Heart right ventricle (tissue), 16 donors: ENCODE measurements at regions of chr11 and their contacts with region 1.

Region 1: GRCh38 chr11:134024420-134025081 is 44.3 kb upstream of the JAM3 start:
- DNase-seq: no peak
- ATAC-seq: no peak
- H3K4me3 ChIP-seq: no peak overlapping the region
- H3K27ac ChIP-seq: no peak overlapping the region
- H3K4me1 ChIP-seq: peaks cover 0 to 14% (median 3%) of the 10 kb centered on the region in 9 donors
- H3K27me3 ChIP-seq: peaks cover 0 to 12% (median 0%) of the 10 kb centered on the region in 7 donors
- CTCF ChIP-seq: no peak

Region 2: DNA sequence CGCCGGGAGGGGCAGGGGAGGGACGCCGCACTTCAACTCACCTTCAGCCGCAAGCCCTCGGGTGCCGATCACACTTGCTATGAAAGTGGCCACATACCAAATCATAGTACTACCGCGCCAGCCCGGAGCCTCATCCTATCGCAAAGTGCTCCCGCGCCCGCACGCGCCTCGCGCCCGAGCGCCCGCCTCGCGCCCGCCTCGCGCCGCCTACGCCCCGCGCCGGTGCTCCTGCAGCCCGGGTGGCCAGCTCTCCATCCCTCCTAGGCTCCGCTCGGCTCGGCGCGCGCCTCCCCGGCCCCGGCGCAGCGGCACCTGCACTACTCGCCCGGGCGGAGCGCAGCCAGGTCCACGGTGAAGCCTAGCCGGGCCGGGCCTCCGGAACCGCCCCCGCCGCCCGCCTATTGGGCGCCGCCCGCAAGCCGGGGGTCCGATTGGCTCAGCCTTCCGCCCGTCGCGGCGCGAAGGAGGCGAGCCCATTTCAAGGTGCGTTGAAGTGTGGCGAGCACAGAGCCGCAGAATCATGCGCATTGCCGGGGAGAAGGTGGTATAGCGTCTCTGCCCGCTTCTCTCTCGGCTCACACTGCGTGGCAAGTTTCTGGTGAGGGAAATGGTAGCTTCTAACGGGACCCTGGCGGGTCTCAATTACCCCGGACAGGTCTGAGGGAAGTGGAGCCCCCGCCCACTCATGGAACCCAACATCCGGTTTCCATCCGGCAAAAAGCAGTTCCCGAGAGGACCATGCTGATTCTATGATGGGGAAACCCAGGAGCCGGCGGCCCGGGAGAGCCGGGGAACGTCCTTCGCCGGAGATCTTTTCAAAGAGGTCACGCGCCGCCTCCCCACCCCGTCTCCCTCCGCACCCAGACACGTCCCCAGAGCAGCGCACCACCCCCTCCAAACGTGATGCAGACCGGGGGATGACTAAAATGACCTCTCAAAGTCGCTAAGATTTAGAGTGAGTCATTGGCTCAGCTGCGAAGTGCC is 67.6 kb before region 1 on chr11 and contains the start of gene IGSF9B:
- intact Hi-C with region 1: loop called in 1 of 10 experiments (anchors 5 kb)
- DNase-seq: peak; percentile 86 to 88
- ATAC-seq: peak; percentile 78 to 90 (median 88)
- H3K4me3 ChIP-seq: peak within 1 kb of the TSS; percentile 47 to 73 (median 68)
- H3K27ac ChIP-seq: peak within 1 kb of the TSS; percentile 67 to 96 (median 90)
- H3K4me1 ChIP-seq: peaks cover 7 to 54% (median 33%) of the 10 kb centered on the region in 9 donors
- H3K27me3 ChIP-seq: peaks cover 0 to 63% (median 6%) of the 10 kb centered on the region in 7 donors
- CTCF ChIP-seq: no peak
- total RNA-seq, gene IGSF9B: 31.0 to 72.3 (median 50.1) TPM